ENCODE measurements at regions of chr6 and their contacts with region 1.

Region 1: GRCh38 chr6:159654483-159655098 is 38.5 kb downstream of the SOD2 start:
- DNase-seq: no peak
- ATAC-seq: peak; percentile 56 to 57
- H3K4me3 ChIP-seq: no peak overlapping the region
- H3K27ac ChIP-seq: no peak overlapping the region
- H3K4me1 ChIP-seq: no peaks in the 10 kb centered on the region
- H3K27me3 ChIP-seq: no peaks in the 10 kb centered on the region
- CTCF ChIP-seq: peak; percentile 63

Region 2: GRCh38 chr6:159174263-159174969 is 480.2 kb before region 1 on chr6:
- intact Hi-C with region 1: loop called (anchors 10 kb)
- DNase-seq: peak; percentile 84
- ATAC-seq: peak; percentile 91 to 92
- H3K4me3 ChIP-seq: no peak overlapping the region
- H3K27ac ChIP-seq: no peak overlapping the region
- H3K4me1 ChIP-seq: peaks cover 13% of the 10 kb centered on the region
- H3K27me3 ChIP-seq: peaks cover 28% of the 10 kb centered on the region
- CTCF ChIP-seq: peak; percentile 93

Region 3: GRCh38 chr6:159490298-159490937 is 164.2 kb before region 1 on chr6:
- intact Hi-C with region 1: no loop called
- DNase-seq: no peak
- ATAC-seq: peak in 1 of 2 donors; percentile 69
- H3K4me3 ChIP-seq: no peak overlapping the region
- H3K27ac ChIP-seq: no peak overlapping the region
- H3K4me1 ChIP-seq: no peaks in the 10 kb centered on the region
- H3K27me3 ChIP-seq: no peaks in the 10 kb centered on the region
- CTCF ChIP-seq: no peak

Region 4: DNA sequence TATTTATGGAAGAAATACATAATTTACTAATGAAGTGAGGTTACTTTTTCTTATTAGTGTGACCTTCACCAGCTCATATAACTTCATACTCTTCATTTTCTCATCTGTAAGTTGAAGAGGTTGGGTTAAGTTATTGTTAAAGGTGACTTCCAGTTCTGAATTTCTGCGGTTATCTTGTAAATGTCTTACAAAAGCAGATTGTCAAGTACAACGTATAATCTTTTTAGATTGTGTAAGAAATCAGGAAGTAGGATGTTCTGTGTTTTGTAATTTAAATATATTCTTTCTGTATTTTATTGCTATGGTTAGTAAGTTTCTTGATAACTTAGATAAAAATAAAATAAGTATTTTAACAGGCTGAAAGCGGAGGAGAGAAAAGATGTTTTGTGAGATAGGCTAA is 84.8 kb after region 1 on chr6:
- intact Hi-C with region 1: no loop called
- DNase-seq: no peak
- ATAC-seq: no peak
- H3K4me3 ChIP-seq: no peak overlapping the region
- H3K27ac ChIP-seq: no peak overlapping the region
- H3K4me1 ChIP-seq: peaks cover 22% of the 10 kb centered on the region
- H3K27me3 ChIP-seq: no peaks in the 10 kb centered on the region
- CTCF ChIP-seq: no peak

Measured in lower lobe of right lung (tissue), 2 donors.